BJ (cell line): ENCODE measurements at regions of chr1 and their contacts with region 1.

Region 1: DNA sequence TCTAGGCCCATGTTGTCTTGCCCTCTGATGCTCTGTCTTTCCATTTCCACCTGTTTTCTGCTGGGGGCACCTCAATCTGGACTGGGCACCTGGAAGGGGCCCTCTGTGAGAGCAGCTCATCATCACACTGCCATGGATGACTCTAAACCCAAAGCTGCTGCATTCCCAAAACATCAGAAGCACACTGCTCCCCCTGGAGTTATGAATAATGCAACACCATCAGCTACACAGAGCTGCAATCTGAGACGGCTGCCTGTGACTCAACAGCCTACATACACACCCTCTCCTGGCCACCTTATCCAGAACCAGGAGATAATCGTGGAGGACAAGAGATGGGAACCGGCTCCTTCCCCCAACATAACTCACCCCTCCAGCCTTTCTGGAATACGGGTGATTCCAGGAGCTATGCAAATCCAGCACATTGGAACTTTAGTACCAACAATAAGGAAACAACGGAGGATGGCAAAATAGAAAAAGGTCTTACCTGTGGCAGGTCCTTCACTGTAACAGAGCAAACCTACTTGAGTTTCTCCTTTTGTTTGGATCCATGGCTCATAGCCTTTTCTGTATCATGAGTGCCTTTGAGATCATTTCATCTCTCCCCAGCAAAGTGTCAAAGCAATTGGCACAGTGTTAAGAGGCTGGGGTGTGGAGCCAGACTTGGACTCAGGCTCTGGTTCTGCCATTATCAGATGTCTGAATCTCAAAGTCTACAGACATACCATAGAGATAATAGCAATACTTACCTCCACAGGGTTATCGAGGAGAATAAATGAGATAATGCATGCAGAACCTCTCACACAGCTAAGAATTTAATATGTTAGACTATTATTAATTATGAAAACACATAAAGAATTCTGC is 29.3 kb downstream of the AK2 start:
- DNase-seq: peak; percentile 43
- H3K4me3 ChIP-seq: no peak overlapping the region
- H3K27me3 ChIP-seq: no peaks in the 10 kb centered on the region
- CTCF ChIP-seq: peak; percentile 66

Region 2: DNA sequence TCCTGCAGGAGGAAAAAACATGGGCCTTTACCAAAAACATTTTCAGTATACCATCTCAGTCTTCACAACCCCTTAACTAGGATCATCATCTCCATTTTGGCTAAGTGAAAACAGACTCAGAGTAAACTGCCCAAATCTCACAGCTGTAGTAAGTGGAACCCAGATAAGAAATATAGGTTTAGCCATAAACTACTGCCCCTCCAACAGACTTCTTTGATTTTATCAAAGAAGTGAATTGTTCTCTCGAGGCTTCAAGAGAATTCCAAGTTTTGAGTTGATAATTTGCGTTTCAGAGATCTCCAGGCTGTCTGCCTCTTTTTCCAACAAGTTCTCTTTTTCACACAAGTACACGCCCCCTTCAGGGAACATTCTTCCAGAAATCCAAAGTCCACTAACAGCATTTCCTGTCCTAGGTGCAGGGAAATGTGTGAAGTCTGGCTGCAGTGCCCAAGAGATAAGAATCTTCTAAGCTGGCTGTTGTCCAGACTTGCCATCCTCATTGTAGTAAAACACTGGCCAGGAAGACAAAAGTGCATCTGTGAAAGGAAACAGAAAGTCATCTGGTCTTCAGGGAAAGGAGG is 73.6 kb before region 1 on chr1:
- CTCF ChIA-PET with region 1: interaction called, 132 read pairs
- POLR2A ChIA-PET with region 1: no interaction called
- DNase-seq: no peak
- H3K4me3 ChIP-seq: no peak overlapping the region
- H3K27me3 ChIP-seq: no peaks in the 10 kb centered on the region
- CTCF ChIP-seq: no peak

Region 3: GRCh38 chr1:32939655-32940371 is 67.6 kb before region 1 on chr1:
- CTCF ChIA-PET with region 1: interaction called, 132 read pairs
- POLR2A ChIA-PET with region 1: no interaction called
- DNase-seq: peak; percentile 78
- H3K4me3 ChIP-seq: no peak overlapping the region
- H3K27me3 ChIP-seq: no peaks in the 10 kb centered on the region
- CTCF ChIP-seq: no peak

Region 4: GRCh38 chr1:32992489-32993323 is 14.7 kb before region 1 on chr1:
- CTCF ChIA-PET with region 1: interaction called, 23 read pairs
- POLR2A ChIA-PET with region 1: no interaction called
- DNase-seq: peak; percentile 87
- H3K4me3 ChIP-seq: no peak overlapping the region
- H3K27me3 ChIP-seq: no peaks in the 10 kb centered on the region
- CTCF ChIP-seq: no peak

Region 5: DNA sequence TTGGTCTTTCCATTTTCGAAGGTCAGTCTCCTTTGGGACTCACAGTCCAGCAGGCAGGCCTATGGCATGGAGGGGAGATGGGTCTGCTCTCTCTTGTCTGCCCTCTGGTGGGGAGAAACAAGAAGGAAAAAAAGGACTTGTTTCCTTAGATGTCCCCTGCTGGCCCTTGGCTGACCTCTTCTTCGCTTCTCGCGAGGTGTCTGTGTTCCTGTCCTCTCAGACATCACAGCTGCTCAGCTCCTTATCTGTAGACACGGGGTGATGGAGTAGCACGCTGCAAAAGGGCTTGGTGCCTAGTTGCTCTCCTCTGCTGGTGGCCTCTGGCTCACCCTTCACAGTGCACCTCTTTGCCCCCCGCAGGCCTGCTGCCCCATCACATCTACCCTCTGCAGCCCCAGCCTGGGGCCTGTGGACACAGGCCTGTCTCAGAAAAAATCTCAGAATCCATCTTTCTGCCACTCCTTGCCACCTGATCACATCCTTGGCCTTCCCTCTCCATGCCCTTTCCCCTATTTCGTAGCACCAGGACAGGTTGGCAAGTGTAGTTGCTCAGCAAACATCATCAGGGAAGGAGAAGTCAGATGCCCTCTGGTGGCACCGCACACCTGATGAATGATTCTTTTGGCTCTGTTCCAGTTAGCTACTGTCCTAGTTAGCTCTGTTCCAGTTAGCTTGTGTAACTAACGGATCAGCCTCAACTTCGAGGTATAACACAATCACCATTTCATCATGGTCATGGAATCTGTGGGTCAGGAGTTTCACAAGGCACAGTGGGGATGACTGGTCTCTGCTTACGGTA is 48.0 kb after region 1 on chr1:
- CTCF ChIA-PET with region 1: interaction called, 10 read pairs
- POLR2A ChIA-PET with region 1: no interaction called
- DNase-seq: no peak
- H3K4me3 ChIP-seq: no peak overlapping the region
- H3K27me3 ChIP-seq: no peaks in the 10 kb centered on the region
- CTCF ChIP-seq: peak; percentile 79